ENCODE measurements at regions of chr5 and their contacts with region 1.

Region 1: DNA sequence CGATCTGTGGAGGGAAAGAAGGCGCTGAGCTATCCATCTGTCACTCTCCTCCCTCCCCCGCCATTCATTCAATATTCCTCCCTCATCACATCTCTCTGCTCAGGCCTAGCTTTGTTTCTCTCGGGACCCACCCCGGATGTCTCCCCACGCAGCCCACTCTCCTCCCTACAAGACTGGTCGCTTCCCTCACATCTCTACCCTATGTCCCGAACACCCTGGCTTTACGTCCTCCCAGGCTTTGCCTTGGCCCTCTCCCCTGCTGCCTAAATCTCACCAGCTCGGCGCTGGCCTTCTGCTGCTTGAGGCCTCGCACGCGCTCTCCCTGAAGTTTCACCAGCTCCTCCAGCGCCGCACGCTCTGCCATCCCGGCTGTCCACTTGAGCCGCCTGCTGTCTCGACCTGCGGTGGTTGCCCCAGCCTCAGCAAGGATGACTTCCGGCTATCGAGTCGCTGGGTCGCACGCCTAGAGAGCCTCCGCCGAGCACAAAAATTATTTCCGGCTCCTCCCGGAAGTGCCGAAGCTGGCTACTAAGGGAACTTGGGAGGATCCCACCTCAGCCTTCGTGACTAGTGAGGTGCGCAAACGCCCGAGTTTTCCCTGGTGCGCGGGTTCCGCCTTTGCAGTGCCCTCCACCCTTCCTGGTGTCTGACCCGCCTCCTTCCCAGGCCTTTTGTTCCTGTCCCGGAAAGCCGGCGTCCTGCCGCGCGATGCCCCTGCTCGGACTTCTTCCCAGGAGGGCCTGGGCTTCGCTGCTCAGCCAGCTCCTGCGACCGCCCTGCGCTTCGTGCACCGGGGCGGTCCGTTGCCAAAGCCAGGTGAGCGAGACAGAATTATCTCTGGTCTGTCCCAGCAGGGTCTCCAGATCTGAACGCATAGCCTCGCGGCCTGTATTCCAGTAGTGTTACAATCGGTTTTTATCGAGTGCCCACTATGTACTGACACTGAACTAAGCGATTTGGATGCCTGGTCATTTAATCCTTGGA is at the starts of genes HARS1 and HARS2:
- DNase-seq: peak; percentile 87
- ATAC-seq: peak; percentile 97
- H3K4me3 ChIP-seq: peak within 1 kb of the TSS; percentile 89 to 98 (median 97)
- H3K4me3 Mint-ChIP-seq: peak within 1 kb of the TSS; percentile 99
- H3K27ac ChIP-seq: peak within 1 kb of the TSS; percentile 68 to 81
- H3K27ac Mint-ChIP-seq: peak within 1 kb of the TSS; percentile 94
- H3K4me1 ChIP-seq: peaks cover 14% of the 10 kb centered on the region in 2 donors
- H3K4me1 Mint-ChIP-seq: peaks cover 30% of the 10 kb centered on the region
- H3K27me3 ChIP-seq: no peaks in the 10 kb centered on the region
- H3K27me3 Mint-ChIP-seq: no peaks in the 10 kb centered on the region
- CTCF ChIP-seq: no peak
- total RNA-seq, gene HARS1: 60.5 and 65.6 TPM in 2 replicates
- total RNA-seq, gene HARS2: 65.1 and 68.0 TPM in 2 replicates

Region 2: GRCh38 chr5:140424135-140424534 is 267.1 kb before region 1 on chr5:
- CTCF ChIA-PET with region 1: no interaction called
- POLR2A ChIA-PET with region 1: no interaction called
- intact Hi-C with region 1: no loop called
- DNase-seq: no peak
- ATAC-seq: no peak
- H3K4me3 ChIP-seq: no peak overlapping the region
- H3K4me3 Mint-ChIP-seq: no peak overlapping the region
- H3K27ac ChIP-seq: no peak overlapping the region
- H3K27ac Mint-ChIP-seq: no peak overlapping the region
- H3K4me1 ChIP-seq: no peaks in the 10 kb centered on the region
- H3K4me1 Mint-ChIP-seq: peaks cover 32% of the 10 kb centered on the region
- H3K27me3 ChIP-seq: no peaks in the 10 kb centered on the region
- H3K27me3 Mint-ChIP-seq: no peaks in the 10 kb centered on the region
- CTCF ChIP-seq: no peak

Region 3: DNA sequence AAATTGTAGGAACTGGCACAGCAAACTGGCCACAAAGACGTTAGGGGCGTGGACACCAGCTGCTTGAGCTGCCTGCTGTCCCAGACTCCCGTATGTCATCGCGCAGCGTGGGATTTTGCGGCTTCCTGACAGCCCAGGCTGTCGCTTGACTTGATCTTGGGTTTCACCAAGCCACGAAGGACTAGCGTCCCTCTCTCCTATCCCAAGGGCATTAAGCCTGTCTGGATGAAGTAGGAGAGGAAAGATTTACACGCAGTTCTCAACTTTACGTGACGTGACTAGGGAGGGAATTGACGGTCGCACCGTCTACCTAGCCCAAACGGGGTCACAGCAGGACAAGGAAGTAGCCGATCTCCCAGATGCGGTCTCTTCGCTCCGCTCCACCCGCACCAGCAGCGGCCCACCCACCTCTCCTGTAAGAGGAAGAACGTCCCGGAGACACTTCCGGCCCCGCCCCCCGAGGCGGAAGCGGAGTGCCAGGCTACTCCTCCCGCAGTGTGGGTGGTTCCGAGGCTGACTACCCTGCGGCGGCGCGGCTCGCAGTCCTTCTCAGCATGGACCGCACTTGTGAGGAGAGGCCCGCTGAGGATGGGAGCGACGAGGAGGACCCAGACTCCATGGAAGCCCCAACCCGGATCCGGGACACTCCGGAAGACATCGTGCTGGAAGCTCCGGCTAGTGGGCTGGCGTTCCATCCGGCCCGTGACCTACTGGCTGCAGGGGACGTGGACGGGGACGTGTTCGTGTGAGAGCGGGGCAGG is 26.7 kb before region 1 on chr5 and contains the start of gene WDR55:
- CTCF ChIA-PET with region 1: interaction called, 4 read pairs
- POLR2A ChIA-PET with region 1: interaction called, 3 read pairs
- intact Hi-C with region 1: loop called (anchors 1 kb)
- DNase-seq: peak; percentile 94
- ATAC-seq: peak; percentile 97
- H3K4me3 ChIP-seq: peak within 1 kb of the TSS; percentile 56 to 99 (median 98)
- H3K4me3 Mint-ChIP-seq: peak within 1 kb of the TSS; percentile 99
- H3K27ac ChIP-seq: peak within 1 kb of the TSS; percentile 74 to 88
- H3K27ac Mint-ChIP-seq: peak within 1 kb of the TSS; percentile 98
- H3K4me1 ChIP-seq: peaks cover 14 to 17% of the 10 kb centered on the region in 2 donors
- H3K4me1 Mint-ChIP-seq: peaks cover 30% of the 10 kb centered on the region
- H3K27me3 ChIP-seq: no peaks in the 10 kb centered on the region
- H3K27me3 Mint-ChIP-seq: no peaks in the 10 kb centered on the region
- CTCF ChIP-seq: no peak
- total RNA-seq, gene WDR55: 44.7 and 46.2 TPM in 2 replicates

Region 4: GRCh38 chr5:140710899-140711552 is 19.8 kb after region 1 on chr5:
- CTCF ChIA-PET with region 1: interaction called, 7 read pairs
- POLR2A ChIA-PET with region 1: no interaction called
- intact Hi-C with region 1: loop called (anchors 1 kb)
- DNase-seq: peak; percentile 96
- ATAC-seq: peak; percentile 85
- H3K4me3 ChIP-seq: peak overlapping the region; percentile 69 to 98 (median 73)
- H3K4me3 Mint-ChIP-seq: peak overlapping the region; percentile 95
- H3K27ac ChIP-seq: peak overlapping the region; percentile 64 to 78
- H3K27ac Mint-ChIP-seq: peak overlapping the region; percentile 96
- H3K4me1 ChIP-seq: peaks cover 5 to 11% of the 10 kb centered on the region in 2 donors
- H3K4me1 Mint-ChIP-seq: peaks cover 14% of the 10 kb centered on the region
- H3K27me3 ChIP-seq: no peaks in the 10 kb centered on the region
- H3K27me3 Mint-ChIP-seq: no peaks in the 10 kb centered on the region
- CTCF ChIP-seq: no peak

Measured in B cell (primary cell).